Ascending aorta (tissue), 2 donors: ENCODE measurements at regions of chr9 and their contacts with region 1.

Region 1: DNA sequence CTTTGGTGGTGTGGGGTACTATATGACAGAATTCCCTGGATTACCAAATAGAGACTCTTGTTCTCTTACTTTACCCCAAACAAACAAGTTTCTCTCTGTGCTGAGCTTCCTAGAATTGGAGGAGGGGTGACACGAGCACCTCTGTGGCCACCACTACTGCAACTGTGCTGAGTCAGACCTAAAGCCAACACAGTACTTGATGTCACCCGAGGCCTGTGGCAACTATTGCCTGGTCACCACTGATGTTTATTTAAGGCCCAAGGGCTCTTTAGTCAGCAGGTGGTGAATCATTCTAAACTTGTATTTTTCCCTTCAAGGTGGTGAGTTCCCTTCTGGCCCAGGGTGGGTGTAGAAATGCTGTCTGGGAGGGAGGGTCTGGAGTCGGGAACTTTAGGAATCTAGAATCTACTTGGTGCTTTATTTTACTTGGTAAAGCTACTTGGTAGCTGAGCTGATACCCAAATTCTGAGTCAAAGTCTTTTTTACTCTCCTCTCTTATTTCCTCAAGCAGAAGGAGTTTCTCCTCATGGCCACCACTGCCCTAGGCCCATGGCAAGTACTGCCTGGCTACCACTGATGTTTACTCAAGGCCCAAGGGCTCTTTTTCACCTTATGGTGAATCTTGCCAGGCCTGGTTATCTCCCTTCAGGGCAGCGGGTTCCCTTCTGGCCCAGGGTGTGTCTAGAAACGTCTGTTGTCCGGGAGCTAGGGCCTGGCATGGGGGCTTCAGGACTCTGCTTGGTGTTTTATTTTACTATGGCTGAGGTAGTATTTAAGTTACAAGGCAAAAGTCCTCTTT is 9.8 kb downstream of the LURAP1L start:
- DNase-seq: peak; percentile 77 to 92
- H3K4me3 ChIP-seq: no peak overlapping the region
- H3K27ac ChIP-seq: peak overlapping the region; percentile 95 to 96
- H3K4me1 ChIP-seq: peaks cover 3 to 30% of the 10 kb centered on the region in 2 donors
- H3K27me3 ChIP-seq: no peaks in the 10 kb centered on the region
- CTCF ChIP-seq: no peak

Region 2: GRCh38 chr9:12813960-12814876 is 29.6 kb after region 1 on chr9:
- intact Hi-C with region 1: loop called (anchors 2 kb)
- DNase-seq: peak; percentile 39 to 88
- H3K4me3 ChIP-seq: no peak overlapping the region
- H3K27ac ChIP-seq: peak overlapping the region; percentile 58 to 78
- H3K4me1 ChIP-seq: peaks cover 0 to 43% of the 10 kb centered on the region in 2 donors
- H3K27me3 ChIP-seq: no peaks in the 10 kb centered on the region
- CTCF ChIP-seq: peak; percentile 11 to 35 (median 19)

Region 3: DNA sequence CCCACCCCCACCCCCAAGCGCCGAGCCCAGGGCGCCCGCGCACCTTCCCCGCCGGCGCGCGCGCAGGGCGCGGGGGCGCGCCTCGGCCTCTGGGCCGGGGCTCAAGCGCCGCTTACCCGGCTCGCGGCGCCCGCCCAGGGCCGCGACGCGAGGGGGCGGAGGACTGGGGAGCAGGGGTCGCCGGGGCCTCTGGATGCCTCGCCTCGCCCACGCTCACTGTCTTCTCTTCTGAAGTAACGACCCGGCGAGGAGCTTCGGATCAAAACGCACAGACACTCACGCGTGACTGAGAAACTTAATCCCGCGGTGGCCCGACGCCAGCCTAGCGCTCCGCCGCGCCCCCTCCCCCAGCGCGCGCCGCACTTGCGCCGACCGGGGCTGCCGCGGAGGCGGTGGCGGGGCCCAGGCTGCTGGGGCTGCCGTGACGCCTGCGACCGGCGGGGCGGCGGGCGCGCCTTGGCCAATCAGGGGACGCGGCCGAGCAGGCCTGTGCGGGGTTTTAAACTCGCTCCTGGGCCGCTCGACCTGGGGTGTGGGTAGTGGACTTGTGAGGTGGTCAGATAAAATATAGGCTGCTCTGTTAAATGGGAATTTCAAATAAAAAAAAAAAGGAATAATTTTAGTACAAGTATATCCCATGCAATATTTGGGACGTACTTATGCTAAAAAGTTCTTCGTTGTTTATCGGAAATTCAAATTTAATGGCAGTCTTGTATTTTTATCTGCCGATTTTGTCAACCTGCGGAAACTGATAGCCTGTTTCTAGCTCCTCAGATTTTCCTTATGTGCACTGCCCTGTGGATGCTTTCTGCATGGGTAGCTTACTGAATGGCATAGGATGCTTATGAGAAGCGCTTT is 494.9 kb after region 1 on chr9 and contains the start of gene MPDZ:
- intact Hi-C with region 1: loop called (anchors 10 kb)
- DNase-seq: peak in 1 of 2 donors; percentile 85
- H3K4me3 ChIP-seq: peak within 1 kb of the TSS; percentile 72 to 86
- H3K27ac ChIP-seq: peak within 1 kb of the TSS; percentile 86 to 93
- H3K4me1 ChIP-seq: peaks cover 5 to 8% of the 10 kb centered on the region in 2 donors
- H3K27me3 ChIP-seq: no peaks in the 10 kb centered on the region
- CTCF ChIP-seq: peak in 1 of 3 experiments; percentile 25
- total RNA-seq, gene MPDZ: 46.2 TPM